Natural killer cell (primary cell): ENCODE measurements at regions of chr5 and their contacts with region 1.

Region 1: GRCh38 chr5:169637085-169637548 is at the start of gene DOCK2:
- DNase-seq: peak; percentile 44 to 74
- ATAC-seq: peak; percentile 66 to 83 (median 77)
- H3K4me3 ChIP-seq: peak within 1 kb of the TSS; percentile 86
- H3K4me3 Mint-ChIP-seq: peak within 1 kb of the TSS; percentile 95
- H3K27ac ChIP-seq: peak within 1 kb of the TSS; percentile 82
- H3K27ac Mint-ChIP-seq: peak within 1 kb of the TSS; percentile 91 to 94
- H3K4me1 ChIP-seq: peaks cover 35% of the 10 kb centered on the region
- H3K4me1 Mint-ChIP-seq: peaks cover 54 to 59% of the 10 kb centered on the region in 2 donors
- H3K27me3 ChIP-seq: no peaks in the 10 kb centered on the region
- H3K27me3 Mint-ChIP-seq: no peaks in the 10 kb centered on the region
- CTCF ChIP-seq: no peak
- total RNA-seq, gene DOCK2: 317 to 361 (median 320) TPM

Region 2: DNA sequence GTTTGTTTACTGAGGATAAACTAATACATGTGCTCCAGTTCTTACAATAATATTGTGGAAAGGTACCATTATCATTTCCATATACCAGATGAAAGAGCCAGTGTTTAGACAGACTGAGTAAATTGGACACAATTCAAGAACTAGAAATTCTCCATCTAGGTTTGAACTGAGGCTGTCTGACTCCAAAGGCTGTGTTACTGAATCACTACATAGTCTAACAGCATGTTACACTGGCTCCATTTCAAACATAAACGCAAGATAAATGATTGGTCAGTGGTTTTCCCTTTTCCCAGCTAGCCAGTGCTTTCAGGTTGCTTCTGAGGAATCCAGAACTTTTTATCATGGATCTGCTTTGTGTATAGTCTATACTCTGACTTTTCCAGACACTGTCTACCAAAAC is 45.5 kb before region 1 on chr5:
- intact Hi-C with region 1: no loop called
- DNase-seq: no peak
- ATAC-seq: no peak
- H3K4me3 ChIP-seq: no peak overlapping the region
- H3K4me3 Mint-ChIP-seq: no peak overlapping the region
- H3K27ac ChIP-seq: no peak overlapping the region
- H3K27ac Mint-ChIP-seq: no peak overlapping the region
- H3K4me1 ChIP-seq: no peaks in the 10 kb centered on the region
- H3K4me1 Mint-ChIP-seq: peaks cover 0 to 6% of the 10 kb centered on the region in 2 donors
- H3K27me3 ChIP-seq: no peaks in the 10 kb centered on the region
- H3K27me3 Mint-ChIP-seq: no peaks in the 10 kb centered on the region
- CTCF ChIP-seq: no peak

Region 3: GRCh38 chr5:169650701-169651331 is 13.7 kb after region 1 on chr5:
- intact Hi-C with region 1: loop called (anchors 2 kb)
- DNase-seq: peak in 1 of 2 donors; percentile 63
- ATAC-seq: peak; percentile 60 to 77 (median 69)
- H3K4me3 ChIP-seq: no peak overlapping the region
- H3K4me3 Mint-ChIP-seq: peak overlapping the region; percentile 64
- H3K27ac ChIP-seq: peak overlapping the region; percentile 59
- H3K27ac Mint-ChIP-seq: peak overlapping the region; percentile 90 to 94
- H3K4me1 ChIP-seq: peaks cover 80% of the 10 kb centered on the region
- H3K4me1 Mint-ChIP-seq: peaks cover 99 to 100% of the 10 kb centered on the region in 2 donors
- H3K27me3 ChIP-seq: no peaks in the 10 kb centered on the region
- H3K27me3 Mint-ChIP-seq: no peaks in the 10 kb centered on the region
- CTCF ChIP-seq: no peak

Region 4: DNA sequence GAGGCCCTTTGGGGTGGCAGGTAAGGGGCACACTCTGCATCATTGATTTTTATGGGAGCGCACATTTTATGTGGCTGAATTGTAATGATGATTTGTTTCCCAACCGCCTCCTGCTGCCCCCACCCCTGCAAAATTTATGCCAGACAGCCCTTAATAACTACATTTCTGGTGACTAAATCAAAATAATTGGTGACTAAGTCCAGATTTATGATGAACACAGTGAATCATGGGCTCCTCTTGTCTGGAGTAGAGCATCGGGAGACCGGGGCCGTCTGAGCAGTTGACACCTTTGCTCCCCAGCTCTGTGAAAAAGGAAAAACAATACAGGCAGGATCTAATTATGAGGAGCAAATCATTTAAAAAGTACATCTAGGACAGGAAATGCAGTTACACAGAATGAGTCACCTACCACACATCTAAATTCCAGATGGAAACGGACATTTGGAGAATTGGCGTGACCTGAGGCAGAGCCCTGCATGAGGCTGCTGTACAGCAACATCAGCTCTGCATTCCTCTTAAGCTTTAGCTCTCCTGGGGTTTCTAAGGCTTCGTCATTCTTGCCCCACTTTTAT is 58.9 kb after region 1 on chr5:
- intact Hi-C with region 1: no loop called
- DNase-seq: no peak
- ATAC-seq: no peak
- H3K4me3 ChIP-seq: no peak overlapping the region
- H3K4me3 Mint-ChIP-seq: no peak overlapping the region
- H3K27ac ChIP-seq: no peak overlapping the region
- H3K27ac Mint-ChIP-seq: no peak overlapping the region
- H3K4me1 ChIP-seq: no peaks in the 10 kb centered on the region
- H3K4me1 Mint-ChIP-seq: peaks cover 12 to 24% of the 10 kb centered on the region in 2 donors
- H3K27me3 ChIP-seq: no peaks in the 10 kb centered on the region
- H3K27me3 Mint-ChIP-seq: no peaks in the 10 kb centered on the region
- CTCF ChIP-seq: no peak

Region 5: GRCh38 chr5:169808118-169808581 is 171.0 kb after region 1 on chr5:
- intact Hi-C with region 1: no loop called
- DNase-seq: no peak
- ATAC-seq: no peak
- H3K4me3 ChIP-seq: no peak overlapping the region
- H3K4me3 Mint-ChIP-seq: no peak overlapping the region
- H3K27ac ChIP-seq: no peak overlapping the region
- H3K27ac Mint-ChIP-seq: peak overlapping the region in 1 of 2 donors; percentile 59
- H3K4me1 ChIP-seq: peaks cover 14% of the 10 kb centered on the region
- H3K4me1 Mint-ChIP-seq: peaks cover 44 to 58% of the 10 kb centered on the region in 2 donors
- H3K27me3 ChIP-seq: no peaks in the 10 kb centered on the region
- H3K27me3 Mint-ChIP-seq: no peaks in the 10 kb centered on the region
- CTCF ChIP-seq: no peak